ENCODE measurements at regions of chr14 and their contacts with region 1.

Region 1: DNA sequence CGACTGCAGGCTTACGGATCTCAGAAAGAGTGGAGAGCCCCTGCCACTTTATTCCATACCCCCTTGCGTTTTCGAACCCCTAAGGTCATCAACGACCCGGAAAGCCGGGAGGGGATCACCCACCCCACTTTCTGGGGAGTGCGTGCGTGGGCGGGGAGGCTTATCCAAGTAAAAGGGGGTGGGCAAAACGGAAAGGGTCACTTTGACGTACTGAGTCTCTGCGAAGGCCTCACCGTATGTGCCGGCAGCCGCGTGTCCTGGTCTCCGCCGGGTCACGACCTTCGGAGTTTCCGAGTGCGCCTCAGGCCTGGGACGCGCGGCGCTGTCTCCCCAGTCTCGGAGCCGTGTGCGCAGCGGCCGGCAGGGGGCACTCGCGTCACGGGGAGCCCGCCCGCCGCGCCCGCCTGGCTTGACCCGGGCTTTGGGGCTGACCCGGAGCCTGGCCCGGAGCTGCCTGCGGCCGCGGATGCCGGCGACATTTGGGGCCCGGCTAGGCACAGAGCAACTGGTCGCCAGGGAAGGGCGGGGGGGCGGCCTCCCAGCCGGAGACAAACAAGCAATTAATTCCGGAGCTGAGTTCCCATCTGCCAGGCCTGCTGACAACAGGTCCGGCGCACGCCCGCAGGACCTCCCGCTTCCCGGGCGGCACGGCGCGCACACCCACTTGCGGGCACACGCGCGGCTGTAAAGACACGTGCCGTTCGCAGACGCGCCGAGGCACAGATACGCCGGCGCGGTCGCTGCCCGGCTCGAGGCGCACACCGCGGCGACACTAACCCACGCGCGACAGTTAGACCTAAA is 890 bp upstream of the KIF26A start:
- DNase-seq: peak; percentile 53
- H3K4me3 Mint-ChIP-seq: no peak overlapping the region
- H3K27ac Mint-ChIP-seq: no peak overlapping the region
- H3K4me1 Mint-ChIP-seq: peaks cover 4% of the 10 kb centered on the region
- H3K27me3 Mint-ChIP-seq: peaks cover 21% of the 10 kb centered on the region

Region 2: GRCh38 chr14:104184911-104185499 is 47.5 kb after region 1 on chr14:
- intact Hi-C with region 1: no loop called
- DNase-seq: no peak
- H3K4me3 Mint-ChIP-seq: no peak overlapping the region
- H3K27ac Mint-ChIP-seq: no peak overlapping the region
- H3K4me1 Mint-ChIP-seq: no peaks in the 10 kb centered on the region
- H3K27me3 Mint-ChIP-seq: no peaks in the 10 kb centered on the region

Region 3: DNA sequence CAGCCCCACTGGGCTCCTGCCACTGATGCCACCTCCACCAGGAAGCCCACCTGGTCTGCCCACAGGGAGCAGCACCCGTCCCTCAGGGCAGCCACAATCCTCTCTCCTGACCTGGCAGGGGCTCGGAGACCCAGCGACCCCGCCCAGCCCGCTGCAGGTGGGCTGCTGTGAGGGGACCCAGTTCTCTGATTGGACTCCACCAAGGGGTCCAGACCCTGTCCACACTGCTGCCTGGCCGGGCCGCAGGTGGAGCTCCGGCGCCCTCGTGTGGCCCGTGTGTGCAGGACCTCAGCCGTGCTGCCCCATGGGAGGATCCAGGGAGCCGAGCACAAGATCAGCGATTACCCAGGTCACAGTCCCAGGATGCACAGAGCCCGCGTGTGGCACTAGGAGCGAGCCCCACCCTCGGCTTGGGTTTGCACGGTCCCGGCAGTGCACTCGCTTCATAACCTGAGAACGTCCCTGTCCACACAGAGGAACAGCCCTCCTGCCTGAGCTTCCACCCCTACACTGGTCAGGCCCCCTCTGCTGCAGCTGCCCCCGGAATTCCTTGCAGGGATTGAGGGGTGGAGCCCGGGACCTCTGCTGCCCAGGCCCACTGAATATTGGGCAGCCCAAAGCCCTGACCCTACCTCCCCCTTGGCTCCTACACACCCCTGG is 502.5 kb after region 1 on chr14:
- intact Hi-C with region 1: loop called (anchors 1 kb)
- DNase-seq: peak; percentile 19
- H3K4me3 Mint-ChIP-seq: no peak overlapping the region
- H3K27ac Mint-ChIP-seq: no peak overlapping the region
- H3K4me1 Mint-ChIP-seq: no peaks in the 10 kb centered on the region
- H3K27me3 Mint-ChIP-seq: peaks cover 6% of the 10 kb centered on the region